CD4-positive, alpha-beta memory T cell (primary cell): ENCODE measurements at regions of chr1 and their contacts with region 1.

Region 1: DNA sequence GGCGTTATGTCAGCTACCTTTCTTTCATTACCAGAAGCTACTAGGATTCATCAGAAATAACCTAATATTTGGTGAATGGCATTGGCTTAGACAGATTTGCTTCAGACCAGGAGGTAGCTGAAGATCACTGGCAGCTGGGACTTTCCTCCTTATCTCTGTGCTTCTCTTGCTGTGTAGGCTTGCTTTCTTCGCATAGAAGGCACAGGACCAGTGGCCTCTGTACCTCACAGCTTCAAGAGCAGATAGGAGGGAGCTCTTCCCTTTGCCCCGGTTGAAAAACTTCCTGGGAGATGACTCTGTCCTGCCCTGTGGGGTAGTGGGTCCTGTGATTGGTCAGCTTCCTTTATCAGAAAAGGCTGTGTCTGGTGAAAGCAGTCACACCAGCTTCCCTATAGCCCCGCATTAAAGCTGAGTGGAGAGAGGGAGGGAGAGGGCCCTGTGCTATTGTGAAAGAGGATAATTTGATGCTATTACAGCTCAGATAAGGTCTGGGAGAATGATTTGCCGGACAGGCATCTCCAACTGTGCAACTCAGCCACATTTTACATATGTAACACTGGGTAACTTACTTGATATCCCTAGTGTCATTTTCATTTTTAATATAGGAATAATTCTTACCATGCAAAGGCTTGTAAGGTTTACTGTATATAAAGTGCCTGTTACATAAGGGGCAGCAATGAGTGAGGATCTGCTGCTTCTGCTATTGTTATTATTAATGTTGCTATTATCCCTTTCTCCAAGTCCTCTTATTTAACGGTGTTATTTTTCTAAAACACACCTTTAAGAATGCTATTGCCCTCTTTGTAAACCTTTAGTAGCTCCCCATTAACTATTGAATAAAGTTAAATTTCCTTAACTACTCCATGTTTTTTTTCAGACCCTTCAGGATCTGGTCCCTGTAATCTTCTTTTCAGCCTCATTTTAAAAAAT is 31.6 kb downstream of the OSBPL9 start:
- DNase-seq: no peak
- H3K4me3 ChIP-seq: no peak overlapping the region
- H3K4me3 Mint-ChIP-seq: no peak overlapping the region
- H3K27ac ChIP-seq: no peak overlapping the region
- H3K27ac Mint-ChIP-seq: no peak overlapping the region
- H3K4me1 ChIP-seq: no peaks in the 10 kb centered on the region
- H3K4me1 Mint-ChIP-seq: peaks cover 1 to 7% (median 5%) of the 10 kb centered on the region in 4 donors
- H3K27me3 ChIP-seq: no peaks in the 10 kb centered on the region
- H3K27me3 Mint-ChIP-seq: no peaks in the 10 kb centered on the region

Region 2: DNA sequence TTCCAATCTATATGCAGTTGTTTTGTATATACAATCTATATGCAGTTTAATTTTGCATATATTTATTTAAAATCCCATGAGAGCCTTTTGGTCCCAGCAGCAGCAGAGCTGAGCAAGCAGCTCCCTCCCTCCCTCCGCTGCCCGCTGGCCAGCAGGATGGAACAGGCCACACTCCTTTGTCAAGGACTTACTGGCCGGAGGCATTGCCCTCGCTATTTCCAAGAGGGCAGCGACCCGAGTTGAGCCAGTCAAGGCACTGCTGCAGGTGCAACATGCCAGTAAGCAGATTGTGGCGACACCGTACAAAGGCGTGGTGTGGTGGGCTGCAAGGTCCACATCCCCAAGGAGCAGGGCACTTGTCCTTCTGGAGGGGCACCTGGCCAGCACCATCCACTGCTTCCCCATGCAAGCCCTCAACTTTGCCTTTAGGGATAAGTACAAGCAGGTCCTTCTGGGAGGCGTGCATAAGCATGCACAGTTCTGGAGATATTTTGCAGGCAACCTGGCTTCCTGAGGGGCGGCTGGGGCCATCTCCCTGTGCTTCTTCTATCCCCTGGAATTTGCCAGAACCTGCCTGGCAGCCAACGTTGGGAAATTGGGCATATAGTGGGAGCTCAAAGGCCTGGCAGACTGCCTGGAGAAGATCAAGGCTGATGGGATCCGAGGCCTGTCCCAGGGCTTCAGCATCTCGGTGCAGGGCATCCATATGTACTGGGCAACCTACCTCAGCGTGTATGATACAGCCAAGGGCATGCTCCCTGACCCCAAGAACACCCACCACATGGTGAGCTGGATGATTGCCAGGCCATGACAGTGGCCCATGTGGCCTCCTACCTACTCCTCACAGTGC is 60.7 kb after region 1 on chr1:
- CTCF ChIA-PET with region 1: no interaction called
- POLR2A ChIA-PET with region 1: no interaction called
- intact Hi-C with region 1: loop called (anchors 10 kb)
- DNase-seq: no peak
- H3K4me3 ChIP-seq: no peak overlapping the region
- H3K4me3 Mint-ChIP-seq: no peak overlapping the region
- H3K27ac ChIP-seq: no peak overlapping the region
- H3K27ac Mint-ChIP-seq: no peak overlapping the region
- H3K4me1 ChIP-seq: no peaks in the 10 kb centered on the region
- H3K4me1 Mint-ChIP-seq: peaks cover 0 to 6% (median 3%) of the 10 kb centered on the region in 4 donors
- H3K27me3 ChIP-seq: no peaks in the 10 kb centered on the region
- H3K27me3 Mint-ChIP-seq: no peaks in the 10 kb centered on the region